Mammary epithelial cell (primary cell): ENCODE measurements at regions of chr7 and their contacts with region 1.

Region 1: DNA sequence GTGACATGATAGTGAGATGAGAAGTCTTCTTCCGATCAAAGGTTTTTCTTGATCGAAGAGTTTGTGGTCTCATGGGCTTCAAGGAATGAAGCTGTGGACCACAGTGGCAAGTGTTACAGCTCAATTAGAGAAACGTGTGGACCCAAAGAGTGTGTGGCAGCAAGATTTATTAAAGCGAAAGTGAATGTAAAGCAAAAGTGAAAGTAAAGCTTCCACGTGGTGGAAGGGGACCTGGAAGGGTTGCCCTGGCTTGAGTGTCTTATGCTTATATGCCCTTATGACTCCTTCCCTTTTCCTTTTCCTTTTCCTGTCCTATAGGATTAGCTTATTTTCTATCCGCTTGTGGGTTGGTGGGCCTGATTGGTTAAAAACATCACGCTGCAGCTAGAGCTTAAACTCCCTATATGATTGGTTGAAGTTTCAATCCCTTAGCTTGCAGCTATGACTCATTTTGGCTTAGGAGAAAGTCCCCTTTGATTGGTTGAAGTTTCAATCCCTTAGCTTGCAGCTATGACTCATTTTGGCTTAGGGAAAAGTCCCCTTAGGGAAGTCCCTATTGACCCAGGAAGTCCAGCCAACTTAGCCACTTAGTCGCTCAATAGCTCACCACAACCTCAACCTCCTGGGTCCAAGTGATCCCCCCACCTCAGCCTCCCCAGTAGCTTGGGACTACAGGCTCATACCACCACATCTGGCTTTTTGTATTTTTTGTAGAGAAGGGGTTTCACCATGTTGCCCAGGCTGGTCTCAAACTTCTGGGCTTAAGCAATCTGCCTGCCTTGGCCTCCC is 34.7 kb downstream of the MRPS24 start:
- DNase-seq: peak; percentile 66
- H3K4me3 ChIP-seq: no peak overlapping the region
- H3K27ac ChIP-seq: no peak overlapping the region
- H3K4me1 ChIP-seq: peaks cover 3% of the 10 kb centered on the region
- H3K27me3 ChIP-seq: no peaks in the 10 kb centered on the region
- CTCF ChIP-seq: no peak

Region 2: DNA sequence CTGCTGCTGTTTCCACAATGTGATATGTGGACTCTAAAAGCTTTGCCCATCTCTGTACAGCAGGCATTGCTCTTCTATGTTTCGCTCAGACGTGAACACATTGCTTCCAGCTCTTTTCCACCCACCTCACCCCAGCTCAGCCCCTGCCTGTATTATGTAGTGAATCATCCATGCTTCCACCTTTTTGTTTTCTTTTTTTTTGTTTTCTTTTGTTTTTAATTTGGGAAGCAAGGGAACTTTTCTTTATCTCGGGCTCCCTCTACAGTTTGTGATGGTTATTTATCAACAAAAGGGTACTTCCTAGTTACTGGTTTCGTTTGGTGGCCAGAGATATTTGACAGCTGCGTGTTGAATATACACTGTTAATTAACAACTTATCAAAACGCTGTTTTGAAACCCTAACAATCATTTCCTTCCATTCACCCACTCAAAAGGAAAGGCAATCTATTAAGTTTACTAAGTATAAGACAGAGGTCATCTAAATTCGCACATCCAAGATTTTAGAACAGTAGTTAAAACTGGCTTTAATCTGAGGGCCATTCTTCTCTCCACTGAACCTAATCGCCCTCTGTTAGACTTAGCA is 379.6 kb before region 1 on chr7:
- CTCF ChIA-PET with region 1: no interaction called
- dilution Hi-C with region 1: no loop called
- in situ Hi-C with region 1: no loop called
- intact Hi-C with region 1: loop called (anchors 10 kb)
- DNase-seq: peak; percentile 66
- H3K4me3 ChIP-seq: no peak overlapping the region
- H3K27ac ChIP-seq: no peak overlapping the region
- H3K4me1 ChIP-seq: peaks cover 5% of the 10 kb centered on the region
- H3K27me3 ChIP-seq: no peaks in the 10 kb centered on the region
- CTCF ChIP-seq: peak; percentile 27 to 51

Region 3: DNA sequence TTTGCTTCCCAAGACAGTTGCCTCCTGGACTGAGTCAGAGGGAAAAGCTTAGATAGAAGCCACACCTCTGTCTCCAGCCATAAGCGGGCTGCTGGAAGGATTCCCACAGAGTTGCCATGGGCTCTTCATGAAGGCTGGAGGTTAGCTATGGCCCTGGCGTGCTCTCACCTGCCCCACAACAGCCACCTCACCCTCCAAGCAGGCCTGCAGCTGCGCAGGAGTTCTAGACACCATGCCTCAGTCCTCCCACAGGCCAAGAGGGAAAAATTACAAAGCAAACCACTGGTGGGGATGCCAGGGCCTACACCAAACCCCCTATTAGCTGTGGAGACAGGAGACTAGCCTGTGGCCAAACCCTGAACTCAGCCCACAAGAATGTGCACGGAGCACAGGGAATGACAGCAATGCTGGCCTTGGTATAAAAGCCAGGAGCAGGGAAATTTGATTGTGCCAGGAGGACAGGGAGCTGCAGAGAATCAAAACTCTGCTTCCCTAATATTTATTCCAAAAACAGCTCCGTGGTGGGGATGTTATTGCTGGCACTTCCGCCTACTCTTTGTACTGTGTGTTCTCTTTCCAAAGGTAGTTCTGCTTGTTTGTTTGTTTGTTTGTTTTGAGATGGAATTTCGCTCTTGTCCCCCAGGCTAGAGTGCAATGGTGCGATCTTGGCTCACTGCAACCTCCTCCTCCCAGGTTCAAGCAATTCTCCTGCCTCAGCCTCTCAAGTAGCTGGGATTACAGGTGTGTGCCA is 312.1 kb before region 1 on chr7:
- CTCF ChIA-PET with region 1: no interaction called
- dilution Hi-C with region 1: no loop called
- in situ Hi-C with region 1: no loop called
- intact Hi-C with region 1: no loop called
- DNase-seq: peak; percentile 98
- H3K4me3 ChIP-seq: no peak overlapping the region
- H3K27ac ChIP-seq: peak overlapping the region; percentile 58
- H3K4me1 ChIP-seq: peaks cover 32% of the 10 kb centered on the region
- H3K27me3 ChIP-seq: no peaks in the 10 kb centered on the region
- CTCF ChIP-seq: no peak

Region 4: DNA sequence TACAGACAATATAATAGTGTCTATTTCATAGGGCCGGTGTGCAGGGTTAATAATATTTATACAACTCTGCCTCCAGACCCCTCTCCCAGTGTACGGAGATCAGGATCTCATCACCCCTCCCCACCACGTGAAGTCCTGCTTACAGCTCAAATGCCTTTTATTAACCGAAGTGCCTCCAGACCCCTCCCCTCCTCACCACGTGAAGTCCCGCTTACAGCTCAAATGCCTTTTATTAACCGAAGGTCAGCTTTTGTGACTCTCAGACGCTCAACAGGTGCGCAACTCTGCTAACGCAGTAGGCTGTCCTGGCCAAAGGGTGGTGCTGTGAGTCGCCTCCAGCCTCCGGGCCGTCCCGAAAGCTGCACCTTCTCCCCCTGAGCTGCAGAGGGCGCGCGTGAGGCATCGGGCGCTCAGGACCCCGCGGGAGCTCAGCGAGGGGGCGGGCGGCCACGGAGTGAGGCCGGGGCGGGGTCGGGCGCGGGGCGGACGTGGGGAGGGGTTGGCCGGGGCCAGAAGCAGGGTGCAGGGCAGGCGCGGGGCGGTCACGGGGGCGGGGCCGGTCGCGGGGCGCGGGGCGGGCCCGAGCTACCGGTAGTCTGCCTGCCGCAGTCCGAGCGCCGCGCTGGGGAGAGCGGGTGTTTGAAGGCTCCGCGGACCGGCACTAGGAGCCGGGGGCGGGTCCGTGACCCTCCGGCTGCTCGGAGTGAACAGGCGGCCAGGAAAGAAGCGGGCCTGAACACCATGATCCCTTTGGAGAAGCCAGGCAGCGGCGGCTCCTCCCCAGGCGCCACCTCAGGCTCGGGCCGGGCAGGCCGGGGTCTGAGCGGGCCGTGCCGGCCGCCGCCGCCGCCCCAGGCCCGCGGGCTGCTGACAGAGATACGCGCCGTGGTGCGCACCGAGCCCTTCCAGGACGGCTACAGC is 251.9 kb before region 1 on chr7 and contains the start of gene STK17A:
- CTCF ChIA-PET with region 1: no interaction called
- dilution Hi-C with region 1: no loop called
- in situ Hi-C with region 1: loop called in 1 of 2 experiments (anchors 25 kb)
- intact Hi-C with region 1: loop called (anchors 1 kb)
- DNase-seq: peak; percentile 90
- H3K4me3 ChIP-seq: peak within 1 kb of the TSS; percentile 82 to 98 (median 96)
- H3K27ac ChIP-seq: peak within 1 kb of the TSS; percentile 98
- H3K4me1 ChIP-seq: peaks cover 13% of the 10 kb centered on the region
- H3K27me3 ChIP-seq: no peaks in the 10 kb centered on the region
- CTCF ChIP-seq: peak; percentile 92 to 99
- total RNA-seq, gene STK17A: 109 to 140 TPM

Region 5: DNA sequence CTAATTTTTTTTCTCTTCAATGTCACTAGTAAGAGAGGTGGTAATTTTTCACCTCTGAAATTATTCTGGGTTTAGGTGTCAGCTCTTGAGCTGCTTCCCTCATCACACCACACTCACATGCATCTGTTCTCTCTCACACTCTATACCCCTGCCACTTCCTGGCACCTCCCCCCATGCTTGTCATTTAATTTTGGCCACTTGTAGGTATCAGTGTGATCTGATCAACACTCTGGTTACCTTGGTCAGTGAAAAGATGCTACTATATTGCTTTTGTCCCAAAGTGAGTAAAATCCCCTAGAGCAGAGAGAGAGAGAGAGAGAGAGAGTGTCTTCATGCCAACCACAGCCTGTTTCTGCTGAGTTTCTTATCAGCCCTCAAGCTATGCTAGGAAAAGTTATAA is 209.2 kb before region 1 on chr7:
- CTCF ChIA-PET with region 1: no interaction called
- dilution Hi-C with region 1: no loop called
- in situ Hi-C with region 1: no loop called
- intact Hi-C with region 1: no loop called
- DNase-seq: no peak
- H3K4me3 ChIP-seq: no peak overlapping the region
- H3K27ac ChIP-seq: no peak overlapping the region
- H3K4me1 ChIP-seq: no peaks in the 10 kb centered on the region
- H3K27me3 ChIP-seq: no peaks in the 10 kb centered on the region
- CTCF ChIP-seq: no peak

Region 6: GRCh38 chr7:43700059-43700501 is 134.6 kb before region 1 on chr7:
- CTCF ChIA-PET with region 1: no interaction called
- dilution Hi-C with region 1: no loop called
- in situ Hi-C with region 1: no loop called
- intact Hi-C with region 1: loop called (anchors 2 kb)
- DNase-seq: peak; percentile 46
- H3K4me3 ChIP-seq: no peak overlapping the region
- H3K27ac ChIP-seq: no peak overlapping the region
- H3K4me1 ChIP-seq: peaks cover 2% of the 10 kb centered on the region
- H3K27me3 ChIP-seq: no peaks in the 10 kb centered on the region
- CTCF ChIP-seq: peak; percentile 50 to 60

Region 7: DNA sequence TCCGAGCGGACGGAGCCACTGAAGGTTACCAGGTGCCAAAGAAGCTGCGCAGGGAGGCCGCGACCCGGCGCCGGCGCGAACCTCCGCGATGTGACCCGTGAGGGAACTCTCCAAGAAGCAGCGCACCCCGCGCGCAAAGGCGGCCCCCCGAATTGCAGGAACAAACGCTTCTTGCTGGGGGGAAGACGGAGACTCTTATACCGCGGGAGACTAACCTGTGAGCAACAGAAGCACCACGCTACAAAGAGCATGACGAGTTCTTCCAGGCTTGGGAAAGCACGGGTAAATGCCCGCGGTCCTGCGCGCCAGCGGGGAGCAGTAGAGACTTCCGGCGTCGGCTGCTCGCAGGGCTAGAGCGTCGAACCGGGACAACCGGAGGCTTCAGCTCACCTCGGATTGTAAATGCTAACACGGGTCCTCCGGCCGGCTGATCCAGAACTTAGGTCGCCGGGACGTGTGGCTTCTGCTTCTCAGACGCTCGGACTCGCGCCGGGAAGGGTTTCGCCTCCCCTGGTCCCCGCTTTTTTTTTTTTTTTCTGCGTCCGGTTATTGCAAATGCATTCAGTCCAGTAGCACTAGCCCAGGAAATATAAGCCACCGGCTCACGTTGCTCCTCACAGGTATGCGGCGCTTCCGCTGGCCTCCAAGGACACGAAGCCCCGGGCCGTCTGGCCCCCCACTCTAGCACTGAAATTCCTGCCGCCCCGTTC is 105.3 kb before region 1 on chr7 and contains the start of gene COA1:
- CTCF ChIA-PET with region 1: interaction called, 3 read pairs
- dilution Hi-C with region 1: no loop called
- in situ Hi-C with region 1: loop called in 1 of 2 experiments (anchors 10 kb)
- intact Hi-C with region 1: loop called (anchors 1 kb)
- DNase-seq: peak; percentile 92
- H3K4me3 ChIP-seq: peak within 1 kb of the TSS; percentile 68 to 93 (median 87)
- H3K27ac ChIP-seq: peak within 1 kb of the TSS; percentile 72
- H3K4me1 ChIP-seq: peaks cover 6% of the 10 kb centered on the region
- H3K27me3 ChIP-seq: no peaks in the 10 kb centered on the region
- CTCF ChIP-seq: no peak
- total RNA-seq, gene COA1: 34.8 to 51.6 TPM